KBM-7 (cell line): ENCODE measurements at regions of chr12 and their contacts with region 1.

Region 1: GRCh38 chr12:93990832-93991803 is 157.3 kb upstream of the PLXNC1 start:
- DNase-seq: peak; percentile 26

Region 2: DNA sequence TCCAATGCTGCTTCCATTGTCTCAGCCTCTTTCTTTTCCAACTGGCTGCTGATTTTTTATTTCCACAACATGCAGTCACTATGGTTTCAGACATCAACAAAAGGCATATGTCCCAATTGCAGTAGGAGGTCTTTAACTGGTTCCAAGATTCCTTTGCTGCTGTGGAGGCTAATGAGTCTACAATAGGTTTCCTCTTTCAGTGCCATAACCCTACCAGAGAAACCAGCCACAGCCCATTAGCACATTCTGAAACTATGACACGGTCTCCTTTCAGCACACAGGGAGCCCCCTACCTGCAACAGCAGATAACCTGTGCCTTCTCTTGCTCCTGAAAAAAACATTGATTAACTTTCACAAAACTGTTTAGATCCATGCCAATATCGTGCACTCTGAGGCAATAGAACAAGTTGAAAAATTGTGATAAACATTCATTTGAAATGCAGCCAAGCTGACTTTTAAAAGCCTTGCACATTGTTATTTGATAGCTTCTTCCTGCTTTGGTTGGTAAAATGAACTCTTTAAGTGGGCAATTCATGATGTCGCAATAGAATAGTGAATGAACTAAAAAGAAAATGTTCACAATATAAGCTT is 1255.9 kb before region 1 on chr12:
- in situ Hi-C with region 1: no loop called
- DNase-seq: peak; percentile 34

Region 3: GRCh38 chr12:93502802-93503623 is 488.1 kb before region 1 on chr12:
- in situ Hi-C with region 1: loop called (anchors 25 kb)
- DNase-seq: peak; percentile 58

Region 4: GRCh38 chr12:93634416-93634815 is 356.7 kb before region 1 on chr12:
- in situ Hi-C with region 1: no loop called
- DNase-seq: no peak